Esophagus muscularis mucosa (tissue), 4 donors: ENCODE measurements at regions of chr3 and their contacts with region 1.

Region 1: GRCh38 chr3:124552239-124552638 is 178.0 kb upstream of the UMPS start:
- DNase-seq: no peak
- H3K4me3 ChIP-seq: no peak overlapping the region
- H3K27ac ChIP-seq: no peak overlapping the region
- H3K4me1 ChIP-seq: peaks cover 15 to 48% (median 38%) of the 10 kb centered on the region in 4 donors
- H3K27me3 ChIP-seq: no peaks in the 10 kb centered on the region
- CTCF ChIP-seq: no peak
- EP300 ChIP-seq: no peak
- POLR2A ChIP-seq: no peak

Region 2: GRCh38 chr3:124492811-124493210 is 59.4 kb before region 1 on chr3:
- intact Hi-C with region 1: loop called (anchors 2 kb)
- DNase-seq: no peak
- H3K4me3 ChIP-seq: no peak overlapping the region
- H3K27ac ChIP-seq: no peak overlapping the region
- H3K4me1 ChIP-seq: peaks cover 0 to 7% (median 0%) of the 10 kb centered on the region in 4 donors
- H3K27me3 ChIP-seq: no peaks in the 10 kb centered on the region
- CTCF ChIP-seq: peak; percentile 53 to 58 (median 53)
- EP300 ChIP-seq: no peak
- POLR2A ChIP-seq: no peak

Region 3: GRCh38 chr3:124639406-124640237 is 87.4 kb after region 1 on chr3:
- intact Hi-C with region 1: no loop called
- DNase-seq: no peak
- H3K4me3 ChIP-seq: no peak overlapping the region
- H3K27ac ChIP-seq: no peak overlapping the region
- H3K4me1 ChIP-seq: no peaks in the 10 kb centered on the region
- H3K27me3 ChIP-seq: no peaks in the 10 kb centered on the region
- CTCF ChIP-seq: no peak
- EP300 ChIP-seq: no peak
- POLR2A ChIP-seq: no peak

Region 4: DNA sequence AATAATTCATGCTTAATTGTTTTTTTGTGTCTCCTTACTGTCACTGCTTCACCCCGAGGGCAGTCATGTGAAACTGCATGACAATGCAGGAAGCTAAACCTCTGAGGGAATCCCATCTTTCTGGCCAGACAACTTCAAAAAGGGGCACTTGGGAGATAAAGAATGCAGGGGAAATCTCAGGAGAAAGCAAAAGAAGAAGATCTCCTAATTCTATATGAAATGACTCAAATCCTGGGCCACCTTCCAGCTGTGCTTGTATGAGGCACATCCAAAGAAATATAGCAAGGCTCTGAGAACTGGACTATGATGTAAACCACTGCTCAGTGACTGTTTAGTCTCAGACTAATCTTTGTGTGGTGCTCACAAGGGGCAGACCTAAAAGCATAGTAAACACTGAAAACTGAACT is 155.4 kb after region 1 on chr3:
- intact Hi-C with region 1: no loop called
- DNase-seq: no peak
- H3K4me3 ChIP-seq: no peak overlapping the region
- H3K27ac ChIP-seq: no peak overlapping the region
- H3K4me1 ChIP-seq: no peaks in the 10 kb centered on the region
- H3K27me3 ChIP-seq: no peaks in the 10 kb centered on the region
- CTCF ChIP-seq: no peak
- EP300 ChIP-seq: no peak
- POLR2A ChIP-seq: no peak

Region 5: GRCh38 chr3:124786441-124787241 is 234.4 kb after region 1 on chr3:
- intact Hi-C with region 1: no loop called
- DNase-seq: no peak
- H3K4me3 ChIP-seq: no peak overlapping the region
- H3K27ac ChIP-seq: peak overlapping the region; percentile 58 to 70 (median 66)
- H3K4me1 ChIP-seq: peaks cover 39 to 59% (median 53%) of the 10 kb centered on the region in 4 donors
- H3K27me3 ChIP-seq: no peaks in the 10 kb centered on the region
- CTCF ChIP-seq: peak; percentile 46 to 56 (median 50)
- EP300 ChIP-seq: no peak
- POLR2A ChIP-seq: no peak